Activated CD4-positive, alpha-beta memory T cell treated with anti-CD3 and anti-CD28 coated beads for 36 hours (primary cell): ENCODE measurements at regions of chr3 and their contacts with region 1.

Region 1: DNA sequence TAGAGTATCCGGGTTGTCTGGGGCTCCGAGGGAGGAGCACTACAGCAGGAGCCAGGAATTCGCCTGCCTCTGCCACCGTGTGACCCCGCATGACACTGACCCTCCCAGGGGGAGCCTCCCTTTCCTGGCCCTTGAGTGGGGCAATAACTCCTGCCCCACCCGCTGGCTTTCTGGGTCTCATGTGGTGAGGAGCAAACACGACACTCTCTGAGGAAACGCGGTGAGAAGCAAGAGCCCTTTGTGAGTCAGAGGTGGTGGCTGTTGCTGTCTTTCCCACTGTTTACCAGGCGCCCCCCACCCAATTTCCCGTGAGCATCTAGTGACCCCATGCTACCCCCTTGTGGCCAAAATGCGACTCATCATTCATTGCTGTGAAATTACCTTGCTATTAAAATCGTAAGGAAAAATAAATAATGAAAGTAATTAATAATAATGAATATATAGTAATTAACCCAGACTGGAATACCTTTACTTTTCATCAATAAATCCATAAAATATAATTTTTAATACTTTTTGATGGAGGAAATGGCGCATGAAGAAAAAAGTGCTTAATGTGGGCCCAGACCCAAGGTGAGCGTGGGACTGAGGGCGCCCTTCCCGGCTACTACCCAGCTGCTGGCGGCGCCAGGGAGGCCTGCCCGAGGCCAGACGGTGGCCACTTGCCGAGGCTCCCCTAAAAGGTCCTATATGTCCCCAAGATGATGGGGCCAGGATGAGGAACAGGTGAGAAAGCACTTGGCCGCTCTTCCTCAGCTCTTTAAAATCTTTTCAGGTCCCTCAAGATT is 29.3 kb downstream of the CCNL1 start:
- DNase-seq: peak; percentile 84
- H3K4me3 Mint-ChIP-seq: peak overlapping the region; percentile 45
- H3K27ac Mint-ChIP-seq: peak overlapping the region; percentile 98
- H3K4me1 Mint-ChIP-seq: peaks cover 73% of the 10 kb centered on the region
- H3K27me3 Mint-ChIP-seq: no peaks in the 10 kb centered on the region

Region 2: DNA sequence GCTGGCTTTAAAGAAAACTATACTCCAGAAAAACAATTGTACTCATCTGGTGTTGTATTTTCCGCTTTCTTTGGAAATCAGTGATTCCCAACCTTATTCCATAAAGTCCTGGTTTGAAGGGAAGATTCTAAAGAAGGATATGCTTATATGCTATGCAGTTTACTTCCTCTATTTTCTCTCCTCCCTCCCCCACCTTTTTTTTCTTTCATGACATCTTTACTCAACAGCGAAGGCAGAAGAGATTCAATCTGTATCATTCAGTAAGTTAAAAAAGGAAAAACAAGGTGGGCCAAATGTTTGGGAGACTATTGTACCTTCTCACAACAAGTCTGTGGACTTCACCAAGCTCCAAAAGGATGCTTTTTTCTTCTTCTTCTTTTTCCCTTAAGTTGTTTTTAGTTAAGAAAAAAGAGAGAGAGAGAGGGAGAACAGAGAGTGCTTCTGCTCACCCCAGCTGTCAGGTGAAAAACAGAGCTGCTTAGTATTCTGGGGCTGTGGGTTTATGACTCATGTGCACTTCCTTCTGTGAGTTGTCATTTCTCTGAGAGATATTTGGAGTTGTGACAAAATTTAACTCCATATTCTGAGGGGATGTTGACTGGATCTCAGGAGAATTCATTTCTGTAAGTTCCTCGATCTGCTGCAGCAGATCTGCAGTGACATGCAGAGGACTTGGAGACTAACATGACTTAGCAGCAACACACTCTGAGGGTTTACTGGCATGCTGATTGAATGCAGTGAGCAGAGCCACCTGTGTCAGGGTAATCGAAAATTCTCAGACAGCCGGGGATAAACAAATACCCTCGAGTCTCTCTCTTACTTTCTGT is 646.5 kb before region 1 on chr3:
- CTCF ChIA-PET with region 1: no interaction called
- POLR2A ChIA-PET with region 1: no interaction called
- intact Hi-C with region 1: loop called (anchors 1 kb)
- DNase-seq: peak; percentile 62
- H3K4me3 Mint-ChIP-seq: peak overlapping the region; percentile 66
- H3K27ac Mint-ChIP-seq: peak overlapping the region; percentile 90
- H3K4me1 Mint-ChIP-seq: peaks cover 41% of the 10 kb centered on the region
- H3K27me3 Mint-ChIP-seq: no peaks in the 10 kb centered on the region

Region 3: DNA sequence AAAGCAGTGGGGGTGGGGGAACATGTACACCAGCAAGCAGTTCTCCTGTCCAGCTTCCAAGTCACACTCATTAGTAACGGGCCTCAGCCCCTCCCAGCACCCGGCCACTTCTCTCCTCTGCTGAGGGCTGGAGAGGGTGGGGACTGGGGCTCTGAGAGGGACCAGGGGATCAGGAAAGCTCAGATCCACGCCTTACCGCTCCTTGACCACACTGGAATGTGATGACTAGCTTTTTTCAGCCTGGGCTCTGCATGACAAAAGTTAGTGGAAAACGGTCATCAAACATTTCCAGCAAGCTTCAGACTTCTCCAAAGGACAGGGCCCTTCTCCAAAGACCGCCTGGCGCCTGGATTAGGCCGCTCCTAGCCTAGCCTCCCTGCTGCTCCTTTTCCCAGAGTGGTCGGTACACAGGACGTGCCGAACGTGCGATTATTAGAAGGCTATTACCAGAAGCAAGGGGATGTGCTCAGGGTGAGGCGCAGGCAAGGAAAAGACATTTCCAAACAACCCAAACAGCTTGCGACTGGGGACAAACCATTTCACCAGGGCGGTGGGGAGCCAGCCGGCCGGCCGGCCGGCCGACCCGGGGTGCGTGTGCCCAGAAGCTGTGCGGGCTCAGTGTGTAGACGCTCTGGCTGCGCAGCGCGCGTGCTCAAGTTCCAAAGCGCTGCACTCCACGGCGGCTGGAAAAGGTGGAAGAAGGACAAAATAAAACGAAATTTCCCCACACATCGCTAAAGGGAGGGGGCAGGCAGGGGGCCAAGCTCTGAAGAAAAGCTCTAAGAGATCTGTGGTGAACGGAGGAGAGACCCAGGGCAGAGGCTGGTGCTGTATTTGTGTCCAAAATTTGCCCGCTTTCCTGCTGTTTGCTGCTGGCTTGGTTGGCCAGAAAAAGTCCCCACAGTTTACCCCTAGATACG is 524.7 kb before region 1 on chr3:
- CTCF ChIA-PET with region 1: no interaction called
- POLR2A ChIA-PET with region 1: no interaction called
- intact Hi-C with region 1: loop called (anchors 5 kb)
- DNase-seq: no peak
- H3K4me3 Mint-ChIP-seq: peak overlapping the region; percentile 66
- H3K27ac Mint-ChIP-seq: no peak overlapping the region
- H3K4me1 Mint-ChIP-seq: peaks cover 28% of the 10 kb centered on the region
- H3K27me3 Mint-ChIP-seq: peaks cover 25% of the 10 kb centered on the region

Region 4: GRCh38 chr3:156718622-156719497 is 411.8 kb before region 1 on chr3:
- CTCF ChIA-PET with region 1: no interaction called
- POLR2A ChIA-PET with region 1: no interaction called
- intact Hi-C with region 1: no loop called
- DNase-seq: no peak
- H3K4me3 Mint-ChIP-seq: no peak overlapping the region
- H3K27ac Mint-ChIP-seq: no peak overlapping the region
- H3K4me1 Mint-ChIP-seq: peaks cover 10% of the 10 kb centered on the region
- H3K27me3 Mint-ChIP-seq: no peaks in the 10 kb centered on the region

Region 5: DNA sequence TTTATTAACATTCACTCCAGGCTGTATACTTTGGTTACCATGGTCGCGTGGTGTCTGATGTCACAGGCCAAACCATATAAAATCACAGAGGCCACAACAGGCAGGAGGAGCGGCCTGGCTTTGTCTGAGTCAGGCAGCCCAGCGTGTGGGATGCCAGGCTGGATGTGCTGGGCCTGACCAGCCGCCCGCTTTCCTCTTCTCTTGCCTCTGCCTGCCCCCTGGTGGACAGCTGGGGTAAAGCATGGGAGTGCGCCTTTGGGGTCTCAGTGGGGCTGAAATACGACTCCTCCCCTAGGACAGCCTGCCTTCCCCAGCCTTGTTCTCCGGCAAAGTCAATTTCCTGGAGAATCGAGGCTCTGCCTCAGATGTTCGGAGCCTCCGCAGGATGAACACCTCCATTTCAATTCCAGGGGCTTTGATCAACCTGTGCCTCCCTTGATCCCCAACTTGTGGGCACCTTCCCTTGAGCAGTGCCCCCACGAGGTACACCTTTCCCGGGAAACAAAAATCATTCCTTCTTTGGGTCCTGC is 48.9 kb before region 1 on chr3:
- CTCF ChIA-PET with region 1: interaction called, 53 read pairs
- POLR2A ChIA-PET with region 1: interaction called, 5 read pairs
- intact Hi-C with region 1: no loop called
- DNase-seq: peak; percentile 90
- H3K4me3 Mint-ChIP-seq: no peak overlapping the region
- H3K27ac Mint-ChIP-seq: no peak overlapping the region
- H3K4me1 Mint-ChIP-seq: peaks cover 31% of the 10 kb centered on the region
- H3K27me3 Mint-ChIP-seq: no peaks in the 10 kb centered on the region

Region 6: DNA sequence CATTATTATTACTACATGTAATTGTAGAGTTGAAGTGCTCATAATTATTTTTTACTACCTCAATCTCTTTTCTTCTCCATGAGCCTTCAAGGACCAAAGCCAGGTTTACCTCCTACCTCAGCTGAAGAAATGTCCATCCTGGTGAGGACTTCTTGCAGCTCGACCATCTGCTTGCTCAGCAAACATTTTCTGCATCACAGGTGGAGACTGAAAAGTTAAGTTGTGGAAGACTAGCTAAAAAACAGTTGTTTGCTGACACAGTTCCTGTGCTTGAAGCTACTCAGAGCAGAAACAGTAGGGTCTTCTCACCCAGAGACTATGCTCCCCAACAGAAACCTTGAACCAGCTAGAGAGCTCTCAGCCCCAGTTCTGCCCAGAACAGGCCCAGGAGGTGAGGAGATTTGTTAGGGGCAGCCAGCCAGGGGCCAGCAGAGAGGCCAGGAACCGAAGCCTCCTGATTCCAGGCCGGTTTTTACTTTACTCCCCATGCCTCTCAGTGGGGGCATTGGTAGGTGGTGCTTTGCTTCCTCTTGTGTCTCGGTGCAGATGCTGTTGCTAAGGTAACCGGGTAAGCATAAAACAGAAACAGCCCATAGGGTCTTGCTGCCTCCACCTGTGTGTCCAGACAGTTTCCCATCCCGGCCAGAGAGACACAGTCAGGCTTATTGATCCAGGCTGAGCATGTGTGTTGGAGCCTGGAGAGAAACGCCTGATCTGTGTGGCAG is 25.6 kb before region 1 on chr3:
- CTCF ChIA-PET with region 1: interaction called, 4 read pairs
- POLR2A ChIA-PET with region 1: interaction called, 3 read pairs
- intact Hi-C with region 1: loop called (anchors 1 kb)
- DNase-seq: no peak
- H3K4me3 Mint-ChIP-seq: no peak overlapping the region
- H3K27ac Mint-ChIP-seq: no peak overlapping the region
- H3K4me1 Mint-ChIP-seq: peaks cover 32% of the 10 kb centered on the region
- H3K27me3 Mint-ChIP-seq: no peaks in the 10 kb centered on the region

Region 7: DNA sequence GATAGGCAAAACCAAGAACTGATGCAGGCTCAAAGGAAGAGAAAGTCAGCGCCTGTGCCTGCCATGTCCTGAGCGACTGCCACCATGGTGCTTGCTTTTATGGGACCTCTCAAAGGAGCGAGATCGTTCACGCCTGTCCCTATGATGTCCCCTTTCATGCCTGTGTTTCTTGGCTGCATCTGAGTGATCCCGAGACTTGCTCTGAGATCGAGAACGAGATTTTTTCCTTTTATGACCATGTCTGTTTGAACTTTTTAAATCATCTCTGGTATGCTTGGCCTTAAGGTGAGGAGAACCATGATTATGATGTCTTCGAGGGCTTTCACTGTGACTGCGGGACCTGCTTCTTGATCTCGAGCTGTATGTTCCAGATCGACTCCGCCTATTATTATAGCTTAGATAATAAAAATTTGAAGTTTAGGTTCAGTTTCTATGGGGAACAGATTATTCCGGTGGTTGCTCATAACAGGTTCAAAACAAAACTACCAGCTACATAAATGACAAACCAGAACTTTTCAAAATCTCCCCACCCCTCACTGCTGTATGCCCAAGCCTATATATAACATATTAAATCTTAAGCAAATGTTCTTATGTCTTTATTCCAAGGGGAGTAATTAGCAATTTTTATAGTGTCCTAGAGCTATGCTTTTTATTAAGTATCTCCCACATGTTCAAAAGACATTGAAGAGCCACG is 17.7 kb after region 1 on chr3:
- CTCF ChIA-PET with region 1: interaction called, 8 read pairs
- POLR2A ChIA-PET with region 1: interaction called, 4 read pairs
- intact Hi-C with region 1: loop called (anchors 2 kb)
- DNase-seq: peak; percentile 53
- H3K4me3 Mint-ChIP-seq: peak overlapping the region; percentile 6
- H3K27ac Mint-ChIP-seq: peak overlapping the region; percentile 80
- H3K4me1 Mint-ChIP-seq: peaks cover 53% of the 10 kb centered on the region
- H3K27me3 Mint-ChIP-seq: no peaks in the 10 kb centered on the region

Region 8: GRCh38 chr3:157174649-157175498 is 44.2 kb after region 1 on chr3:
- CTCF ChIA-PET with region 1: no interaction called
- POLR2A ChIA-PET with region 1: interaction called, 3 read pairs
- intact Hi-C with region 1: loop called (anchors 1 kb)
- DNase-seq: peak; percentile 99
- H3K4me3 Mint-ChIP-seq: peak overlapping the region; percentile 89
- H3K27ac Mint-ChIP-seq: peak overlapping the region; percentile 99
- H3K4me1 Mint-ChIP-seq: peaks cover 25% of the 10 kb centered on the region
- H3K27me3 Mint-ChIP-seq: no peaks in the 10 kb centered on the region